Mammary epithelial cell (primary cell): ENCODE measurements at regions of chr3 and their contacts with region 1.

Region 1: GRCh38 chr3:13682331-13683013 is 133.5 kb downstream of the FBLN2 start:
- DNase-seq: no peak
- H3K4me3 ChIP-seq: no peak overlapping the region
- H3K27ac ChIP-seq: no peak overlapping the region
- H3K4me1 ChIP-seq: no peaks in the 10 kb centered on the region
- H3K27me3 ChIP-seq: no peaks in the 10 kb centered on the region
- CTCF ChIP-seq: no peak

Region 2: DNA sequence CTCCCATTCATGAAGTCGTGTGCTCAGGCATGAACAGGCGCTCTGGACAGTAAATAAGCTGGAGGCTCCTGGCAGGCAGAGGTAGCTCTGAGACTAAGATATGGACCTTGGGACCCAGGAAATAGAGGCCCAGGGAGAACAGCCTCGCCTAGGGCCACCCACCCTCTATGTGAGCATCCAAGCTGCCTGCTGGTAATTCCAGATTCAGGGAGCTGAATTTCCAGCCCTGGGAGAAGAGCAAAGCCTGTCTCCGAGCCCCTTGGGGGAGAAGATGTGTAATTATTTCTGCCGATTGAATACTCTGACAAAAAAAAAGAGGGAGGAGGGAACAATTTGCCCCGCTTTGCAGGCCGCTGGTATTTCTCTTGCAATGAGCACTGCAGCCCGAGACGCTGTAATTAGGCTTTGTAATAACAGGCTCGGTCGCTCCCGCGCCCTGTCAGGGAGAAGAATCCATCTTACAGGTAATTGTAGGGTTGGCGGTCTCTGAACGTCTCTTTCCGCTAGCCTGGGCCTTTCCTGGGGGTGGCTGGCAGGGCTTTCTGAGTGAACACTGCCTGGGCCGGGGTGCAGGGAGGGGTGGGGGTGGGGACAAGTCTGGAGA is 65.9 kb after region 1 on chr3:
- CTCF ChIA-PET with region 1: no interaction called
- dilution Hi-C with region 1: loop called (anchors 5 kb)
- in situ Hi-C with region 1: no loop called
- intact Hi-C with region 1: no loop called
- DNase-seq: no peak
- H3K4me3 ChIP-seq: no peak overlapping the region
- H3K27ac ChIP-seq: no peak overlapping the region
- H3K4me1 ChIP-seq: no peaks in the 10 kb centered on the region
- H3K27me3 ChIP-seq: no peaks in the 10 kb centered on the region
- CTCF ChIP-seq: no peak

Region 3: GRCh38 chr3:13827256-13827655 is 144.8 kb after region 1 on chr3:
- CTCF ChIA-PET with region 1: no interaction called
- dilution Hi-C with region 1: no loop called
- in situ Hi-C with region 1: no loop called
- intact Hi-C with region 1: no loop called
- DNase-seq: no peak
- H3K4me3 ChIP-seq: no peak overlapping the region
- H3K27ac ChIP-seq: no peak overlapping the region
- H3K4me1 ChIP-seq: peaks cover 34% of the 10 kb centered on the region
- H3K27me3 ChIP-seq: no peaks in the 10 kb centered on the region
- CTCF ChIP-seq: no peak